ENCODE measurements at regions of chr4 and their contacts with region 1.

Region 1: DNA sequence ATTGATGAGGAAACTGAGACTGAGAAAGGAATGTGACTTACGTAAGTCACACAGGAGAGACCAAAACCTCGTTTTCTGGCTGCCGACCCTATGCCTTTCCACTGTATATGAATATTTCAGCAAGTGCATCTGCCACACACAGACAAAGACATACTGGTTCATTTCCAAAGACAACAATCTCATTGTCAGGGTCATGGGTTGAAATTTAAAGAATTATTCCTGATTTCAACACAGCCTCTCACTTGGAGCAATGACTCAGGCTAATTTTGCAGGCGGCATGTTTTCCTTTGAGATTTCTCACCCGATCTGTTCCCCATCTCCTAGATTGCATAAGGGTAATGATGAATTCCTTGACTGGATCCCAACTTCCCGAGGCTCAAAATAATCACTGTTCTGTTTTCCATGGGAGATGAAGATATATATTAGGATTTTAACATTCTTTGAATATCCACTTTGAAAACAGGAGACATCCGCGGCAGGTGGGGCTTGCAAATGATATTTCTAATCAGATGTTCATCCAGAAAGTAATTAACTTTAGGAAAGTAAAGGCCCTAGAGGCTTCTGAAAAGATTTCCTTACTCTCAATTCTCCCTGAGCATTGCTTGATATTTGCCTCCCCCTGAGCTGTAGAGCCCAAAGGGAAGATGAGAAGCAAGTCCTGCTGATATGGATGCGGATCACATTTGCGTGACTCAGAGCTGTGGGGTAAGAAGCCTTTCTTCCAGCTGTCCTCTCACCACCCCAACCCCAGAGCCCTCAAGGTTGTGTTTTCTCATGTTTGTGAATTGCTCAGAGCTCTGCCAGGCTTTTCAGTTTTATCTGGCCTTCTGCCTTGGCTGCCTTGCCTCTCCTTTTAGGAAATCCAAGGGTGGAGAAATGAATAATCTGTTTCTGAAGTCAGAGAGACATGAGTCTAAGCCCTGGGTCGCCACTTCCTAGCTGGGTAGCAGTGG is 361.1 kb upstream of the BOD1L1 start:
- DNase-seq: peak; percentile 98
- H3K4me3 Mint-ChIP-seq: peak overlapping the region; percentile 21
- H3K27ac Mint-ChIP-seq: peak overlapping the region; percentile 75
- H3K4me1 Mint-ChIP-seq: peaks cover 39% of the 10 kb centered on the region
- H3K27me3 Mint-ChIP-seq: peaks cover 13% of the 10 kb centered on the region
- CTCF ChIP-seq: no peak

Region 2: DNA sequence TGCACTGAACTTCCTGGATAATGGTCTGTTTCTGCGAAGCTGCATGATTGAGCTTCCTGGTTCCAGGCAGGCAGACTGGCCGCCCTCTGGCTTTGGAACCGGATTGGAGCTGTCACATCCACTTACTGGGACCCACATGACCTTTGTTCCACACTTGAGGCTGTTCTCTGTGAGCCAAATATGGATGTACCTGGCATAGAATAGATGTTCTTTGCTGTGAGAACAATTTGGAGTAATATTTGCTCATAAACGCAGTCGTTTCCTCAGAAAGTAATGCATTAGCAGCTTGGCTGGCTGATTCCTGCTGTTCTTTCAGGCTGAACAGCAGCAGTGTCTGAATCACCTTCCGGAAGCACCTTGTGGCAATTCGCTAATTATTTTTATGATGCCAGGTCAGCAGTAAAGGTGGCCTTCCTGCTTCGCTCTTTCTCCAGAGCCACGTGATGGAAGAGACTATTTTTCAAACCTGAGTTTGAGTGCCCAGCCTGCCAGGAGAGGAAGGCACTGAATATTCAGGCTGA is 283.0 kb before region 1 on chr4:
- CTCF ChIA-PET with region 1: no interaction called
- POLR2A ChIA-PET with region 1: interaction called, 11 read pairs
- intact Hi-C with region 1: loop called (anchors 2 kb)
- DNase-seq: peak; percentile 88
- H3K4me3 Mint-ChIP-seq: peak overlapping the region; percentile 63
- H3K27ac Mint-ChIP-seq: peak overlapping the region; percentile 95
- H3K4me1 Mint-ChIP-seq: peaks cover 57% of the 10 kb centered on the region
- H3K27me3 Mint-ChIP-seq: no peaks in the 10 kb centered on the region
- CTCF ChIP-seq: no peak

Region 3: DNA sequence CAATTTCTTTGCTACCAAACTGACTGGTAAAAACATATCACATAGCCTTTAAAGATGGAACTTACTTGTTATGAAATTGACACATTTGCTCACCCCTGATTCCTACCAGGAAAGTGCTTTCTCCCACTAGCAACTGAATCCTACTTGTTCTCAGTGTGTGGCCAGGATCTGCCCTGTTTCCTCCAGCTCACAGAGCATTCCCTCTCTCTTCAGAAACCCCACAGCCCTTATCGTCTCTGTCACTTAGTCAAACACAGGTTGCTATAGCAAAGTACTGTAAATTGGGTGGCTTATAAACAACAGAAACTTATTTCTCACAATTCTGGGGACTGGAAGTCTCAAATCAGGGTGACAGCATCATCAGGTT is 95.9 kb before region 1 on chr4:
- CTCF ChIA-PET with region 1: no interaction called
- POLR2A ChIA-PET with region 1: interaction called, 3 read pairs
- intact Hi-C with region 1: loop called (anchors 1 kb)
- DNase-seq: no peak
- H3K4me3 Mint-ChIP-seq: peak overlapping the region; percentile 25
- H3K27ac Mint-ChIP-seq: peak overlapping the region; percentile 96
- H3K4me1 Mint-ChIP-seq: peaks cover 46% of the 10 kb centered on the region
- H3K27me3 Mint-ChIP-seq: no peaks in the 10 kb centered on the region
- CTCF ChIP-seq: no peak

Region 4: DNA sequence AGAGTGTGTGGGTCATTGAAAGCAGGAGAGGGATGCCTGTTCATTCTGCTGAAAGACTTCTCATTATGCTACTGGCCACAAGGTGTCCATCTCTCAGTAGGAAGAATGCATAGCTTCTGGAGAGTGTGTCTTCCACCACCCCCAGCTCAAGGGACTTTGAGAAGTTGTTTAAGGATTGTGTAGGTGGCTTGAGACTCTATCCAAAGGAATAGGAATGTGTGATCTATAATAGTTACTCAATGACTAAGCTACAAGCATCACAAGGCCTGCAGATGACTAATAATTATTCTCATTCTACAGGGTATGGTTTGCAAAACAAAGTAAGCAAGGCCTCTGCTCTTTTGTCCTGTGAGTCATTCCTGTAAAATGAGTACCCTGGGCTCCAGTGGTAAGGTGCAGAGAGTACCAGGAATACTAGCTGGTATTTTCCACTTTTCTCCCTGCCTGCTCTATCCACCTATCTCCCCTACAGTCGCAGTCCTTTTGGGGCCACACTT is 81.3 kb before region 1 on chr4:
- CTCF ChIA-PET with region 1: no interaction called
- POLR2A ChIA-PET with region 1: interaction called, 7 read pairs
- intact Hi-C with region 1: loop called (anchors 1 kb)
- DNase-seq: peak; percentile 95
- H3K4me3 Mint-ChIP-seq: peak overlapping the region; percentile 9
- H3K27ac Mint-ChIP-seq: peak overlapping the region; percentile 96
- H3K4me1 Mint-ChIP-seq: peaks cover 40% of the 10 kb centered on the region
- H3K27me3 Mint-ChIP-seq: no peaks in the 10 kb centered on the region
- CTCF ChIP-seq: peak; percentile 35

Region 5: DNA sequence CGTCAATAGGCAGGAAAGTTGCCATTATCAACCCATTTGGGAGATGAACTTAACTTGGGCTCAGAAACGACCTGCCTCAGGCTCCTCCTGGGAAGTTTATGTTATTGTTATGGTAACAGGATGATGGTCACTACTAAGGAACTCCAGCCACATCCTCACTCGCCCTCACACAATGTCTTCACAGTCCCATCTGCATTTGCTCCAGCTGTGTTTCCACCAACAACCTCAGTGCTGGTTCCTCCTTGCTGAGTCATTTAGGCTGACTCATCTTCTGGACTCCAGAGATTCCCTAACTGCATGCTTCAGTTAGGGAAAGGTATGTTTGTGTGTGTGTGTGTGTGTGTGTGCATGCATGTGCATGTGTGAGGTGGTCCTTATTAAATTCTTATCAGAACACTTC is 67.7 kb before region 1 on chr4:
- CTCF ChIA-PET with region 1: no interaction called
- POLR2A ChIA-PET with region 1: interaction called, 7 read pairs
- intact Hi-C with region 1: loop called (anchors 1 kb)
- DNase-seq: peak; percentile 97
- H3K4me3 Mint-ChIP-seq: peak overlapping the region; percentile 24
- H3K27ac Mint-ChIP-seq: peak overlapping the region; percentile 96
- H3K4me1 Mint-ChIP-seq: peaks cover 41% of the 10 kb centered on the region
- H3K27me3 Mint-ChIP-seq: no peaks in the 10 kb centered on the region
- CTCF ChIP-seq: no peak

Region 6: GRCh38 chr4:14059006-14059405 is 70.4 kb after region 1 on chr4:
- CTCF ChIA-PET with region 1: no interaction called
- POLR2A ChIA-PET with region 1: no interaction called
- intact Hi-C with region 1: no loop called
- DNase-seq: no peak
- H3K4me3 Mint-ChIP-seq: no peak overlapping the region
- H3K27ac Mint-ChIP-seq: no peak overlapping the region
- H3K4me1 Mint-ChIP-seq: no peaks in the 10 kb centered on the region
- H3K27me3 Mint-ChIP-seq: no peaks in the 10 kb centered on the region
- CTCF ChIP-seq: no peak

Region 7: GRCh38 chr4:14143892-14144291 is 155.3 kb after region 1 on chr4:
- CTCF ChIA-PET with region 1: no interaction called
- POLR2A ChIA-PET with region 1: no interaction called
- intact Hi-C with region 1: no loop called
- DNase-seq: peak; percentile 6
- H3K4me3 Mint-ChIP-seq: no peak overlapping the region
- H3K27ac Mint-ChIP-seq: no peak overlapping the region
- H3K4me1 Mint-ChIP-seq: no peaks in the 10 kb centered on the region
- H3K27me3 Mint-ChIP-seq: no peaks in the 10 kb centered on the region
- CTCF ChIP-seq: no peak

Region 8: DNA sequence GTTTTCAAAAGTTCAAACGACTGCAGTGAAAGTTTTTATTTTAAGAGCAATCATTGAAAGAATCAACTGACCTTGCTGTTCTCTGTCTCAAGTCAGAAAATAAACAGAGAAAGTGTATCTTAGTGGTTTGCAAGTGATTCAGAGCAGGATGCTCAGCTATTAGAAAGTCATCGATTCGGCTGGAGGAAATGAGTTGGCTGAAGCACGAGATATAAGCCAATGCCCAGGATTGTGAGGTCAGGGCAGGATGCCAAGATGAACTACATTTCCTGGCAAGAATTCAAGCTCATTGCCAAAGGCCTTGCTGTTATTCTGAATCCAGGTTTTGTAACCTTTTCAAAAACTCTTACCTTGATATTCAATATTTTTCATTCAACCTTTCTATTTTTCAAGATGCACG is 180.3 kb after region 1 on chr4:
- CTCF ChIA-PET with region 1: no interaction called
- POLR2A ChIA-PET with region 1: interaction called, 4 read pairs
- intact Hi-C with region 1: loop called (anchors 1 kb)
- DNase-seq: peak; percentile 96
- H3K4me3 Mint-ChIP-seq: no peak overlapping the region
- H3K27ac Mint-ChIP-seq: no peak overlapping the region
- H3K4me1 Mint-ChIP-seq: peaks cover 20% of the 10 kb centered on the region
- H3K27me3 Mint-ChIP-seq: no peaks in the 10 kb centered on the region
- CTCF ChIP-seq: no peak

Region 9: GRCh38 chr4:14254252-14254651 is 265.6 kb after region 1 on chr4:
- CTCF ChIA-PET with region 1: no interaction called
- POLR2A ChIA-PET with region 1: no interaction called
- intact Hi-C with region 1: loop called (anchors 5 kb)
- DNase-seq: peak; percentile 71
- H3K4me3 Mint-ChIP-seq: no peak overlapping the region
- H3K27ac Mint-ChIP-seq: no peak overlapping the region
- H3K4me1 Mint-ChIP-seq: no peaks in the 10 kb centered on the region
- H3K27me3 Mint-ChIP-seq: no peaks in the 10 kb centered on the region
- CTCF ChIP-seq: peak; percentile 52